ENCODE measurements at regions of chr5 and their contacts with region 1.

Region 1: DNA sequence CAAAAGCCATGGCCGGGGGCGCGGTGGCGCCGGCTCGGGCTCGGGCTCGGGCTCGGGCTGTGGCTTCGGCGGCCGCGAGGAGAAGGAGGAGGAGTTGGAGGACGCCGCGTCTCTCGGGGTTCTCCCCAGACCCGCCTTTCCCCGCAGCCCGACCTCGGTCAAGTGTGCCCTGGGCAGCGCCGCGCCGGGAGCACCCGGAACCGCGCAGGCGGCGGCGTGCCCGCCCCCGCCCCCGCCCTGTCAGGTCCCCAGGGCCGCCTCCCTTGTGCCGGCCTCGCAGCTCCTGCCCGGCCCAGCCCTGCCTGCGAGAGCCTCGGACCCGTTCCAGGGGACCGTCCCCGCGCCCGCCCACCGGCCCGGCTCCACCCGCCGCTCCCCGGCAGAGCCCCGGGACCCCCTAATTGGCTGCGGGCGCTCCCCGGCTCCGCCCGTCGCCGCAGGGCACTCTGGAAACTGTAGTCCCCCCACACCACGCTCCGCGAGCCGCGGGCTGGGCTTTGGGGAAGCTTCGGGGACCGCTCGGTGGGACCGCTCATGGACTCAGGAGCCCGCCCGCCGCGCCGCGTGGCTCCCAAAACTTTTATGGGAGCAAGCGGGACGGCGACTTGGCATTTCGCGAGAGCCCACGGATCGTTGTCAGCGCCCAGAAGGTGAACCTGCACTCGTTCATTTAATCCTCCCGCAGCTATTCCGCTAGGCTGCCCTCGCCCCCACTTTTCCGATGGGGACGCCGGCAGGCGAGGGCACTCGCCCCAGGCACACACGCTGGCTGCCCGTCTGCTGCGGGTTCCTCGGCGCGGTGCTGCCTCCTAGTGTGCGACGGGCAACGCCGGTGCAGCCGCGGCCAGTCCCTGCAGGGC is at the start of gene STK10:
- DNase-seq: peak; percentile 91
- H3K4me3 ChIP-seq: peak within 1 kb of the TSS; percentile 69 to 89 (median 74)
- H3K27ac ChIP-seq: peak within 1 kb of the TSS; percentile 74
- H3K4me1 ChIP-seq: peaks cover 16% of the 10 kb centered on the region
- H3K27me3 ChIP-seq: peaks cover 0 to 2% of the 10 kb centered on the region in 2 experiments
- CTCF ChIP-seq: peak; percentile 95 to 96
- POLR2A ChIP-seq: peak; percentile 52
- total RNA-seq, gene STK10: 47.2 and 57.9 TPM in 2 replicates

Region 2: DNA sequence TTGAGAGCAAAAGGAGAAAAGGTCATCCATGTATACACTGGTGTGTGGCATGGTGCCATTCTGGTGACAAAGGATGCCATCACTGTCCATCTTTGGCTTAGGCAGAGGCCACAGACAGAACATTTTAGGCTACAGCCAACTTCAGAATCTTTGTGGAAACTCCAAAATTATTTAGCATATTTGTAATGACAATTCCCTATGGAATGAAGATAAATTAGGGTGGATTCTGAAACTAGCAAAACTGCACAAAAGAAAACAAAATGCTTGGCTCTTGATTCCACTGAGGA is 274.3 kb before region 1 on chr5:
- CTCF ChIA-PET with region 1: interaction called, 50 read pairs
- POLR2A ChIA-PET with region 1: no interaction called
- dilution Hi-C with region 1: no loop called
- intact Hi-C with region 1: loop called (anchors 1 kb)
- DNase-seq: no peak
- H3K4me3 ChIP-seq: no peak overlapping the region
- H3K27ac ChIP-seq: no peak overlapping the region
- H3K4me1 ChIP-seq: peaks cover 10% of the 10 kb centered on the region
- H3K27me3 ChIP-seq: no peaks in the 10 kb centered on the region
- CTCF ChIP-seq: no peak
- POLR2A ChIP-seq: no peak

Region 3: GRCh38 chr5:172059661-172060100 is 128.6 kb before region 1 on chr5:
- CTCF ChIA-PET with region 1: interaction called, 30 read pairs
- POLR2A ChIA-PET with region 1: no interaction called
- dilution Hi-C with region 1: no loop called
- intact Hi-C with region 1: no loop called
- DNase-seq: peak; percentile 35
- H3K4me3 ChIP-seq: no peak overlapping the region
- H3K27ac ChIP-seq: no peak overlapping the region
- H3K4me1 ChIP-seq: no peaks in the 10 kb centered on the region
- H3K27me3 ChIP-seq: no peaks in the 10 kb centered on the region
- CTCF ChIP-seq: peak; percentile 50 to 61
- POLR2A ChIP-seq: no peak

Region 4: GRCh38 chr5:172123269-172123692 is 65.0 kb before region 1 on chr5:
- CTCF ChIA-PET with region 1: interaction called, 16 read pairs
- POLR2A ChIA-PET with region 1: interaction called, 14 read pairs
- dilution Hi-C with region 1: no loop called
- intact Hi-C with region 1: no loop called
- DNase-seq: no peak
- H3K4me3 ChIP-seq: no peak overlapping the region
- H3K27ac ChIP-seq: no peak overlapping the region
- H3K4me1 ChIP-seq: no peaks in the 10 kb centered on the region
- H3K27me3 ChIP-seq: no peaks in the 10 kb centered on the region
- CTCF ChIP-seq: no peak
- POLR2A ChIP-seq: no peak

Region 5: DNA sequence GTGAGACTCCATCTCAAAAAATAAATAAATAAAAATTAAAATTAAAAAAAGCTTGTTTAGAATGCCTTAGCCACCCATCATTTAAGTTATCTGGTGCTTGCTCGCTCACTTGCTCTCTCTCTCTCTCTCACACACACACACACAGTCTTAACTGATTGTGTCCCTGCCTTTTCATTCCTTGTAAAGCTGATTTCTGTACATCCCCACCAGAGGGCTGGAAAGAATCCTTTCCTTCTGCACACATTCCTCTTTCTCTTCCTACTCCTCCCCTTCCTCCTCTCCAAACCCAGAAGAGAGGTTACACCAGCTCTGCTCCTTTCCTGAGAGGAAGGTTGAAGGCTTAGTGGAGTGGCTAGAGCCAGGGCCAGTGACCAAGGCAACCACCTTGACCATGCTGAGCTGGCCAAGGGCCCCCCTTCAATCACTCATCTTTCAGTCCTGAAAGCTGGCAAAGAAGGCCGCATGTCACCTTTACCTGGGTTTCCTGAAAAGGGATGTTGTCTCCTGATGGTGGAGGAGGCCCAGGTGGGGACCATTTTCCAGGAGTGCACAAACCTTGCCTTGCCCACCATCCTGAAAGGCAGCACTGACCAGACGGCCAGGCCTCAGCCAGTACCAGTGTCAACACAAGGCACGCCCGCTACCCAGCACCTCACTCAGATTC is 25.8 kb before region 1 on chr5:
- CTCF ChIA-PET with region 1: interaction called, 18 read pairs
- POLR2A ChIA-PET with region 1: interaction called, 7 read pairs
- dilution Hi-C with region 1: no loop called
- intact Hi-C with region 1: loop called (anchors 1 kb)
- DNase-seq: no peak
- H3K4me3 ChIP-seq: no peak overlapping the region
- H3K27ac ChIP-seq: no peak overlapping the region
- H3K4me1 ChIP-seq: peaks cover under 1% of the 10 kb centered on the region
- H3K27me3 ChIP-seq: no peaks in the 10 kb centered on the region
- CTCF ChIP-seq: no peak
- POLR2A ChIP-seq: no peak

Region 6: GRCh38 chr5:172255444-172255843 is 67.2 kb after region 1 on chr5:
- CTCF ChIA-PET with region 1: no interaction called
- POLR2A ChIA-PET with region 1: no interaction called
- dilution Hi-C with region 1: no loop called
- intact Hi-C with region 1: no loop called
- DNase-seq: no peak
- H3K4me3 ChIP-seq: no peak overlapping the region
- H3K27ac ChIP-seq: no peak overlapping the region
- H3K4me1 ChIP-seq: no peaks in the 10 kb centered on the region
- H3K27me3 ChIP-seq: no peaks in the 10 kb centered on the region
- CTCF ChIP-seq: no peak
- POLR2A ChIP-seq: no peak

Region 7: GRCh38 chr5:172266676-172267092 is 78.4 kb after region 1 on chr5:
- CTCF ChIA-PET with region 1: no interaction called
- POLR2A ChIA-PET with region 1: interaction called, 15 read pairs
- dilution Hi-C with region 1: no loop called
- intact Hi-C with region 1: no loop called
- DNase-seq: no peak
- H3K4me3 ChIP-seq: no peak overlapping the region
- H3K27ac ChIP-seq: no peak overlapping the region
- H3K4me1 ChIP-seq: no peaks in the 10 kb centered on the region
- H3K27me3 ChIP-seq: no peaks in the 10 kb centered on the region
- CTCF ChIP-seq: no peak
- POLR2A ChIP-seq: no peak

Region 8: GRCh38 chr5:172454358-172455086 is 266.3 kb after region 1 on chr5 and contains the start of gene SH3PXD2B:
- CTCF ChIA-PET with region 1: interaction called, 3 read pairs
- POLR2A ChIA-PET with region 1: no interaction called
- dilution Hi-C with region 1: no loop called
- intact Hi-C with region 1: loop called (anchors 5 kb)
- DNase-seq: peak; percentile 51
- H3K4me3 ChIP-seq: peak within 1 kb of the TSS; percentile 92 to 98 (median 95)
- H3K27ac ChIP-seq: peak within 1 kb of the TSS; percentile 63
- H3K4me1 ChIP-seq: peaks cover 36% of the 10 kb centered on the region
- H3K27me3 ChIP-seq: no peaks in the 10 kb centered on the region
- CTCF ChIP-seq: no peak
- POLR2A ChIP-seq: peak; percentile 61
- total RNA-seq, gene SH3PXD2B: 66.3 and 71.8 TPM in 2 replicates

Measured in endothelial cell of umbilical vein (primary cell).